ENCODE measurements at regions of chr7 and their contacts with region 1.

Region 1: GRCh38 chr7:116165717-116166116 is 44.6 kb upstream of the TES start:
- DNase-seq: no peak
- ATAC-seq: no peak
- H3K4me3 Mint-ChIP-seq: no peak overlapping the region
- H3K27ac Mint-ChIP-seq: no peak overlapping the region
- H3K4me1 Mint-ChIP-seq: peaks cover 8% of the 10 kb centered on the region
- H3K27me3 Mint-ChIP-seq: peaks cover 3% of the 10 kb centered on the region
- CTCF ChIP-seq: no peak

Region 2: GRCh38 chr7:116152276-116152675 is 13.4 kb before region 1 on chr7:
- CTCF ChIA-PET with region 1: interaction called, 10 read pairs
- POLR2A ChIA-PET with region 1: no interaction called
- intact Hi-C with region 1: no loop called
- DNase-seq: no peak
- ATAC-seq: peak; percentile 27
- H3K4me3 Mint-ChIP-seq: no peak overlapping the region
- H3K27ac Mint-ChIP-seq: no peak overlapping the region
- H3K4me1 Mint-ChIP-seq: no peaks in the 10 kb centered on the region
- H3K27me3 Mint-ChIP-seq: peaks cover 5% of the 10 kb centered on the region
- CTCF ChIP-seq: no peak

Region 3: GRCh38 chr7:116195451-116195850 is 29.7 kb after region 1 on chr7:
- CTCF ChIA-PET with region 1: no interaction called
- POLR2A ChIA-PET with region 1: no interaction called
- intact Hi-C with region 1: no loop called
- DNase-seq: no peak
- ATAC-seq: no peak
- H3K4me3 Mint-ChIP-seq: no peak overlapping the region
- H3K27ac Mint-ChIP-seq: no peak overlapping the region
- H3K4me1 Mint-ChIP-seq: no peaks in the 10 kb centered on the region
- H3K27me3 Mint-ChIP-seq: peaks cover 2% of the 10 kb centered on the region
- CTCF ChIP-seq: no peak